Caco-2 (cell line): ENCODE measurements at regions of chr18 and their contacts with region 1.

Region 1: GRCh38 chr18:45722899-45723298 is 1.1 kb upstream of the SLC14A1 start:
- DNase-seq: peak; percentile 67 to 80
- H3K4me3 ChIP-seq: no peak overlapping the region
- H3K4me3 Mint-ChIP-seq: no peak overlapping the region
- H3K27ac Mint-ChIP-seq: no peak overlapping the region
- H3K4me1 ChIP-seq: no peaks in the 10 kb centered on the region
- H3K4me1 Mint-ChIP-seq: no peaks in the 10 kb centered on the region
- H3K27me3 ChIP-seq: no peaks in the 10 kb centered on the region
- H3K27me3 Mint-ChIP-seq: no peaks in the 10 kb centered on the region
- CTCF ChIP-seq: peak; percentile 48 to 76

Region 2: GRCh38 chr18:45488645-45489044 is 234.3 kb before region 1 on chr18:
- CTCF ChIA-PET with region 1: no interaction called
- POLR2A ChIA-PET with region 1: no interaction called
- intact Hi-C with region 1: no loop called
- DNase-seq: no peak
- H3K4me3 ChIP-seq: no peak overlapping the region
- H3K4me3 Mint-ChIP-seq: no peak overlapping the region
- H3K27ac Mint-ChIP-seq: no peak overlapping the region
- H3K4me1 ChIP-seq: no peaks in the 10 kb centered on the region
- H3K4me1 Mint-ChIP-seq: no peaks in the 10 kb centered on the region
- H3K27me3 ChIP-seq: no peaks in the 10 kb centered on the region
- H3K27me3 Mint-ChIP-seq: no peaks in the 10 kb centered on the region
- CTCF ChIP-seq: no peak

Region 3: DNA sequence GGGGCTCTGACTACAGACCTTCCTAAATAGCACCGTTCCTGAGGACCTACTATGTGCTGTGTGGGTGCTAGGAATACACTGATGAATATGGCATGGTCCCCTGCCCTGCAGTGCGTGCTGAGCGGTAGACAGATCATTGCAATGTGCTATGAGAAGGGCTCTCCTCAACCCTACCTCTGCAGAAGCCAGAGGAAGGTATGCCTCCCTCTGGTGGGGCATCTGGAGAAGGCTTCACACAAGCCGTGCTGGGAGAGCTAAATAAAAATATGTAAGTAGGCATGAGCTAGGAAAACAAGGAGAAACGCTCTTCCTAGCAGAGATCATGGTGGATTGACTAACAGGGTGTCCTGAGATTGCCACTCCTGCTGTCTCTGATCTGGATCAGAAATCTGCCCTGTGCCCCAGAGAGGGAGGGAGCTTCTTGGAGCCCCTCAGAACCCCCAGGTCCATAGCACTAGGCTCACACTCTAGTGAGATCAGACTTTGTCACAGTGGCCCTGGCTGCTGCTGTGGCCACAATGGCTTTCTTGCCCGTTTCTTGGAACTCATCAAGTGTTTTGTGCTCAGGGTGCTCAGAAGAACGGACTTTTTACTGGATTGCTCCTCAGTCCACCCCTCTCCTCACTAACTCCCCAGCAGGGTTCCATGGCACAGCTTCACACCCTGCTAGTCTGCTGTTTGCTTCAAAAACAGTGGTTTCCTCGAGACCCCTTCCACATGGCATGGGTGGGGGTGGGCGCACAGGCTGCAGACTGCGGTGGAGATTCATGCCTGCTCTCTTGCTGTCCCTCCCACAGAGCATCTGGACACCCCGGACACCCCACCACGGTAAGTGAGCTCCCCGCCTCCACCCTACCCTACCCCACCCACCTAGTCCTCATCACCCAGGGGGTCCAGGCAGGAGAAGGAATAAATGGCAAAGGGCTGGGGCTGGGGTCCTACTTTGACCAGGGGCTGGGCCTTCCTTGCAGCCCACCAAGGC is 116.8 kb after region 1 on chr18:
- CTCF ChIA-PET with region 1: interaction called, 6 read pairs
- POLR2A ChIA-PET with region 1: no interaction called
- intact Hi-C with region 1: loop called (anchors 1 kb)
- DNase-seq: peak; percentile 38 to 46
- H3K4me3 ChIP-seq: no peak overlapping the region
- H3K4me3 Mint-ChIP-seq: no peak overlapping the region
- H3K27ac Mint-ChIP-seq: no peak overlapping the region
- H3K4me1 ChIP-seq: 0 out of 2 replicates have a peak, but pooled peaks cover 7% of the 10 kb centered on the region
- H3K4me1 Mint-ChIP-seq: peaks cover 16% of the 10 kb centered on the region
- H3K27me3 ChIP-seq: no peaks in the 10 kb centered on the region
- H3K27me3 Mint-ChIP-seq: no peaks in the 10 kb centered on the region
- CTCF ChIP-seq: peak in 1 of 2 experiments; percentile 41

Region 4: GRCh38 chr18:45879681-45880655 is 157.1 kb after region 1 on chr18:
- CTCF ChIA-PET with region 1: interaction called, 6 read pairs
- POLR2A ChIA-PET with region 1: no interaction called
- intact Hi-C with region 1: loop called (anchors 1 kb)
- DNase-seq: peak; percentile 36 to 64
- H3K4me3 ChIP-seq: no peak overlapping the region
- H3K4me3 Mint-ChIP-seq: no peak overlapping the region
- H3K27ac Mint-ChIP-seq: no peak overlapping the region
- H3K4me1 ChIP-seq: no peaks in the 10 kb centered on the region
- H3K4me1 Mint-ChIP-seq: no peaks in the 10 kb centered on the region
- H3K27me3 ChIP-seq: no peaks in the 10 kb centered on the region
- H3K27me3 Mint-ChIP-seq: no peaks in the 10 kb centered on the region
- CTCF ChIP-seq: peak; percentile 81

Region 5: DNA sequence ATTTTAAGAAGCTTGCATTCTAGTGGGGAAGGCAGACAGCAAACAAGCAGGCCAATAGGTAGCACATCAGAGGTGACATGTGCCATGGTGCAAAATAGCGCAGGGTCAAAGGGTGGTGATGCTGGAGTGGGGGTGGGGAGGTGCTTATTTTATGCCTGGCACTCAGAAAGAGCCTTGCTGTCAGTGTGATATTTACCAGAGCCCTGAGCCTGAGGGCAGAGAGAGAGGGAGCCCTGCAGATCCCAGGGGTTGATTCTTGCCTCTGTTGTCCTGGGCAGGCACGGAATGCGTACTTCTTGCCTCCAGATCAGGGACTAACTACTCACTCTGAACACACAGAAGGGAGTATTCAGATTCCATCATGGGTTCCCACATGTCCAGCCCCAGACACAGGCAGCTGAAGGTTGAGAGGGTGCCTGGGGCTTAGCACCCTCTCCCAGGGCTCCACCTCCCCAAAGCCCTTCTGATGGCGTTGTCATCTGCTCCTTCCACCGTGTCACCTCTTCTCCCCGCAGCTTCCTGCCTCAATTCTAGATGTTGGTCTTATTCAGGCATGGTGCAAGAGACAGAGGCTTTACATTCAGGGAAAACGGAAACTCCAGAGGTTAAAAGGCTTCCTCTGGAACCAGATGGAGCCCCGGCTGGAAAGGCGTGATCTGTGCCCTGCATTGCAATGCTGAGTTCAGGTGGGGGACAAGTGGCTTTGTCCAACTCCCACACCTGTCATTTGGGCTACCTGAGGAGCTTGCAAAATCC is 633.6 kb after region 1 on chr18:
- CTCF ChIA-PET with region 1: no interaction called
- POLR2A ChIA-PET with region 1: no interaction called
- intact Hi-C with region 1: no loop called
- DNase-seq: no peak
- H3K4me3 ChIP-seq: no peak overlapping the region
- H3K4me3 Mint-ChIP-seq: no peak overlapping the region
- H3K27ac Mint-ChIP-seq: no peak overlapping the region
- H3K4me1 ChIP-seq: no peaks in the 10 kb centered on the region
- H3K4me1 Mint-ChIP-seq: no peaks in the 10 kb centered on the region
- H3K27me3 ChIP-seq: no peaks in the 10 kb centered on the region
- H3K27me3 Mint-ChIP-seq: no peaks in the 10 kb centered on the region
- CTCF ChIP-seq: no peak